Activated naive CD4-positive, alpha-beta T cell treated with anti-CD3 and anti-CD28 coated beads for 36 hours (primary cell): ENCODE measurements at regions of chr6 and their contacts with region 1.

Region 1: DNA sequence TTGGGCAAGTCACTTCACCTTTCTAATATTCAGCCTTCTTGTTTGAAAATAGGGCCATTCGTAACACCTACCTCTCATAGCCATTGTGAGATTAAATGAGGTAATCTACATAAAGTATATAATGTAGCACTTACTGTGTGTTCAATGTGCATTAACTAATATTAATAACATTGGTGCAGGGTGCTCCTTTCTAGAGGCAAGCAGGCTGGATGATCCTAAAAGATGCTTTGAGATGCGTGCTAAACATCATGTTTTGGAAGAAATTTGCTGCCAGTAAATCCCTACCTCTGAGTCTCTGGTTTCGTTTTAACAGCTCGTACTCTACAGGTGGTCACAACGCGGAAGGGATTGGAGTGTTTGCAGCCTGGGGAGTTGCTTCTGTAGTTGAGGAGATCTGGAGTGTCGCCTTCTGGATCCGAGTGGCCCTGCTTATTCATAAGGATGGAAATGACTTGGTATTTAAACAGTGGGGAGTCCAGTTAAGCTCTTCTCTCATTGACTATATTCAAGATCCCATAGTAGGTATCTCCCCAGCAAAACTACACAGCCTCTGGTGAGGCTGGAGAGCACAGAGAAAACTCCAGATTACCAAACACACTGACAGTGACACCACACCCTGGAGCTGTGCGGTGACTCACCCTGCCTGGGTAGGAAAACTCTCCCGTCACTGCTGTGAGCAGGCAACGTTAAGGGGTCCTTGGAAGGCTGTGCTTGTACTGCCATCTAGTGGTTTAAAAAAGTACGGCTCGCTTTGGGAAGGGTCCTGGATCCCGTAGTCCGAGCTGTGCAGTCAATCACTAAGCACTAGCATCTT is 107.9 kb downstream of the MAP3K7 start:
- DNase-seq: peak; percentile 94
- H3K4me3 Mint-ChIP-seq: no peak overlapping the region
- H3K27ac Mint-ChIP-seq: peak overlapping the region; percentile 81
- H3K4me1 Mint-ChIP-seq: peaks cover 60% of the 10 kb centered on the region
- H3K27me3 Mint-ChIP-seq: no peaks in the 10 kb centered on the region

Region 2: DNA sequence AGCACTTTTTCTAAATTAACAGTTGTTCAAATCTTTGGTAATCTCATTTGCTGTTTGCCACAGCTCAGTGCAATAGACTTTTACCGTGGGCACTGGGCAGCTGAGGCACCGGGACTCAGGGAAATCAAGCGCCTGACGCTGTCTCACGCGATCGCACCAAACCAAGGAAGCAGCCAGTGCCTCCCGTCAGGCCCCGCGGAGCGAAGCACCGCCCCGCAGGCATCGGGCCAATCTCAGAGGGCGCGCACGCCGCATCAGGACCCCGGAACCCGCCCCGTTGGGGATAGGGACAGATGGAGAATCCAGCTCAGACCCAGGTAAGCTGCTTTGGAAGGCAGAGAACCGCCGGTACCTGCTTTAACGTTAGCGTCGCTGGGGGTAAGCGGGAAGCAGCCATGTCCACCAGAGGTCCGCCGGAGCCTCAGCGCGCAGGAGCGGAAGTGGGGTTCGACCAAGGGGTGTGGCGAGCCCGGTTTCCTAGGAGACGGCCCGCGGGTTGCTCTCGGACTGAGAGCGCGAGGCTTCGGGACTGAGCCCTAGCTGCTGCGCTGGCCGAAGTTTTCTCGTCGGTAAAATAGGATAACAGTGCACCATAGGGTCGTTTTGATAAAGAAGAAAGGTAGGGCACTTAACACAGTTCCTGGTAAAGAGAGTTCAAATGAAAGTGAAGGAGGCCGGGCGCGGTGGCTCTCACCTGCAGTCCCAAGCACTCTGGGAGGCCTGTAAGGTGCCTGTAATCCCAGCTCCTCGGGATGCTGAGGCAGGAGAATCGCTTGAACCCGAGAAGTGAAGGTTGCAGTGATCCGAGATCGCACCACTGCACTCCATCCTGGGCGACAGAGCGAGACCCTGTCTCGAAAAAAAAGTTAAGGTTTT is 840.4 kb before region 1 on chr6 and contains the start of gene LYRM2:
- CTCF ChIA-PET with region 1: no interaction called
- intact Hi-C with region 1: loop called (anchors 1 kb)
- DNase-seq: peak; percentile 95
- H3K4me3 Mint-ChIP-seq: peak within 1 kb of the TSS; percentile 83
- H3K27ac Mint-ChIP-seq: peak within 1 kb of the TSS; percentile 96
- H3K4me1 Mint-ChIP-seq: peaks cover 28% of the 10 kb centered on the region
- H3K27me3 Mint-ChIP-seq: no peaks in the 10 kb centered on the region
- total RNA-seq, gene LYRM2: 15.8 to 18.3 TPM

Region 3: GRCh38 chr6:89927791-89928550 is 551.0 kb before region 1 on chr6:
- CTCF ChIA-PET with region 1: interaction called, 3 read pairs
- intact Hi-C with region 1: loop called (anchors 5 kb)
- DNase-seq: no peak
- H3K4me3 Mint-ChIP-seq: no peak overlapping the region
- H3K27ac Mint-ChIP-seq: peak overlapping the region; percentile 81
- H3K4me1 Mint-ChIP-seq: peaks cover 54% of the 10 kb centered on the region
- H3K27me3 Mint-ChIP-seq: no peaks in the 10 kb centered on the region

Region 4: GRCh38 chr6:90184334-90185298 is 294.4 kb before region 1 on chr6:
- CTCF ChIA-PET with region 1: no interaction called
- intact Hi-C with region 1: loop called (anchors 2 kb)
- DNase-seq: no peak
- H3K4me3 Mint-ChIP-seq: peak overlapping the region; percentile 46
- H3K27ac Mint-ChIP-seq: peak overlapping the region; percentile 66
- H3K4me1 Mint-ChIP-seq: peaks cover 75% of the 10 kb centered on the region
- H3K27me3 Mint-ChIP-seq: no peaks in the 10 kb centered on the region

Region 5: GRCh38 chr6:90343581-90343980 is 135.4 kb before region 1 on chr6:
- CTCF ChIA-PET with region 1: no interaction called
- intact Hi-C with region 1: no loop called
- DNase-seq: no peak
- H3K4me3 Mint-ChIP-seq: no peak overlapping the region
- H3K27ac Mint-ChIP-seq: no peak overlapping the region
- H3K4me1 Mint-ChIP-seq: peaks cover 17% of the 10 kb centered on the region
- H3K27me3 Mint-ChIP-seq: no peaks in the 10 kb centered on the region

Region 6: DNA sequence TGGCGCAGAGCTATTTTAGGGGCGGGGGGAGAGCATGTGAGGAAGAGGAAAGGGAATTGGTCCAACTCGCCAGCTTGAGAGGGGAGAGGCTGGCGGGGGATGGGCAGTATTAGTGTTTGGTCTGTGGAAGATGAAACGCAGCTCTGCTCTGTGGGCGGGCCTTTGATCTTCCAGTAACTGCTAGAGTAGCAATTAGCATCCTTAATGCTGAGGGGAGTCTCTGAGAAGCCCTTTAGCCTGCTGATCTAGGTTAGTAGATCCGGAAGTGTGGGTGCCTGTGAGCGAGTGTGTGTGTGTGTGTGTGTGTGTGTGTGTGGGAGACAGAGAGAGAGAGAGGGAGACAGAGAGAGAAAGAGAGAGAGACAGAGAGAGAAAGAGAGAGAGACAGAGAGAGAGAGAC is 65.1 kb before region 1 on chr6:
- CTCF ChIA-PET with region 1: interaction called, 10 read pairs
- intact Hi-C with region 1: loop called (anchors 1 kb)
- DNase-seq: peak; percentile 96
- H3K4me3 Mint-ChIP-seq: peak overlapping the region; percentile 71
- H3K27ac Mint-ChIP-seq: peak overlapping the region; percentile 94
- H3K4me1 Mint-ChIP-seq: peaks cover 69% of the 10 kb centered on the region
- H3K27me3 Mint-ChIP-seq: no peaks in the 10 kb centered on the region